ENCODE measurements at regions of chr1 and their contacts with region 1.

Region 1: DNA sequence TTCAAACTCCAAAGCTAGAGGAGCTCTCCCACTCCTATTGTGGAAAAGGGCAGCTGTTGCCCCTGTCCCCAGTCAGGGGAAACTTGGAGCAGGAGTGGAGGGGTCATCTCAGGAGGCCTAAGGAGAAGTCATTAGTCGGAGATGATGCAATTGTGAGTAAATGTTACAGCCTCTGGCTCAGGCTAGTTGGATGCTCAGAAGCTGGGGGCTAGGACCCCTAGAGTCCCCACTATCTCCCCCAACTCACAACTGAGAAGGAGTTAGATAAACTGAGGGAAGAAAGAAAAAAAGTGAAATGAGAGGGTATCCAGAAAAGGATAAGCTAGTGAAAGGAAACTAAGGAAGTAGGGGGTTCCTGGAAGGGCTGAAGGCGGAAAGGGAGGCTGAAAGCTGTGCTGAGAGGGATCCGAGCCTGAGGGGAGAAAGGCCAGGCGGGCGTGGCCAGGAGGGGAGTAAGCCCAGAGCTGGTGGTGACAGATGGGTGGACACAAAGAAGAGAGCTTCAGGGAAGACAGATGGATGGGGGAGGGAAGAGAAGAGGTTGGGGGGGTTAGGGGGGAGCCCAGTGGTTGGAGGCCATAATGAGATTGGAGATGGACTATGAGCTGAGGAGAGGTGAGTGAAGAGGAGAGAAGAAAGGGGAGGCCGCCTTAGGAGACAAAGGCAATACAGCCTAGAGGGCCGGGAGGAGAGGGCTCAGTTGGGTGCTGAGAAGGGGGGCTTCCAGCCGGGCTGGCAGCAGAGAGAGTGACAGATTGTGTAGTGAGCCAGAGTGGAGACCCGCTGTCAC is 4.5 kb upstream of the NHLH1 start:
- DNase-seq: no peak
- H3K4me3 Mint-ChIP-seq: no peak overlapping the region
- H3K27ac Mint-ChIP-seq: peak overlapping the region; percentile 26
- H3K4me1 Mint-ChIP-seq: peaks cover 5% of the 10 kb centered on the region
- H3K27me3 Mint-ChIP-seq: peaks cover 4% of the 10 kb centered on the region
- CTCF ChIP-seq: no peak

Region 2: GRCh38 chr1:159077120-159077961 is 1285.0 kb before region 1 on chr1:
- CTCF ChIA-PET with region 1: no interaction called
- POLR2A ChIA-PET with region 1: no interaction called
- intact Hi-C with region 1: no loop called
- DNase-seq: no peak
- H3K4me3 Mint-ChIP-seq: no peak overlapping the region
- H3K27ac Mint-ChIP-seq: no peak overlapping the region
- H3K4me1 Mint-ChIP-seq: no peaks in the 10 kb centered on the region
- H3K27me3 Mint-ChIP-seq: no peaks in the 10 kb centered on the region
- CTCF ChIP-seq: no peak

Region 3: GRCh38 chr1:160416369-160416768 is 54.0 kb after region 1 on chr1:
- CTCF ChIA-PET with region 1: interaction called, 214 read pairs
- POLR2A ChIA-PET with region 1: no interaction called
- intact Hi-C with region 1: no loop called
- DNase-seq: peak; percentile 77
- H3K4me3 Mint-ChIP-seq: no peak overlapping the region
- H3K27ac Mint-ChIP-seq: no peak overlapping the region
- H3K4me1 Mint-ChIP-seq: peaks cover 12% of the 10 kb centered on the region
- H3K27me3 Mint-ChIP-seq: peaks cover 11% of the 10 kb centered on the region
- CTCF ChIP-seq: peak; percentile 83

Region 4: DNA sequence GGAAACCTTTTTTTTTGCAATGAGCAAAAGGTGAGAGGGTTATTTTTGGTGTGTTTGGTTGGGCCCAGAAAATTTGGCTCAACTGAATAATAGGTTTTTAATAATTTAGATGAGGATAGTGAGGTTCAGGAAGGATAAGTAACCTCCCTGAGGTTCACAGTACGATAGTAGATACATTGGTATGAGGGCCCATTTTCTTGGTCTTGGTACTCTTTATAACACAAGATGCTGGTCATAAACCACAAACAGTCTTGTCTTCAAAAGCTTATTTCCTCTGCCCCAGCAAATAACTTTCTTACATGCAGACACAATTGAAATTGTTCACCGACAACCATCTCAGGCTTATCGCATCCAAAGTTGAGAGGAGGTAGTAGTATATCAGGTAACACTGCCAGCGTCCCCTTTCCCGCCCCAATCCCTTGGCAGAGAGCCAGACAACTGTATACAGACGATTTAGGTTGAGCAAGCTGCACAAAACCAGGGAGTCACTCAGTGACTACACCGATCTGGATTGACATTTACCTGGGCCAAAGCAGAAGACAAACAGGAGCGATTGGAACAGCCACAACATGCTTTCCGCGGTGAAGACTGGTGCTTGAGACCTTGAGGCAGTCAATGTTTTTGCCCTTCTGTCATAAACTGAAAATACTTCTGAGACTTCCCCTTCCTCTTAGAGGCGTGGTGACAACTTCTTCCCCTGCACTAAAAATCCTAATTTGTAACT is 160.4 kb after region 1 on chr1 and contains the start of gene SLAMF6:
- CTCF ChIA-PET with region 1: no interaction called
- POLR2A ChIA-PET with region 1: no interaction called
- intact Hi-C with region 1: no loop called
- DNase-seq: no peak
- H3K4me3 Mint-ChIP-seq: no peak within 1 kb of the TSS
- H3K27ac Mint-ChIP-seq: no peak within 1 kb of the TSS
- H3K4me1 Mint-ChIP-seq: peaks cover 28% of the 10 kb centered on the region
- H3K27me3 Mint-ChIP-seq: no peaks in the 10 kb centered on the region
- CTCF ChIP-seq: no peak
- total RNA-seq, gene SLAMF6: not detected in 2 replicates

Measured in MCF 10A (cell line).